Dendritic cell treated with granulocyte-macrophage colony-stimulating factor and Interleukin-4, amounts not matched to agents 40 ng/mL and 50 ng/mL, for 4 days (primary cell): ENCODE measurements at regions of chr10 and their contacts with region 1.

Region 1: DNA sequence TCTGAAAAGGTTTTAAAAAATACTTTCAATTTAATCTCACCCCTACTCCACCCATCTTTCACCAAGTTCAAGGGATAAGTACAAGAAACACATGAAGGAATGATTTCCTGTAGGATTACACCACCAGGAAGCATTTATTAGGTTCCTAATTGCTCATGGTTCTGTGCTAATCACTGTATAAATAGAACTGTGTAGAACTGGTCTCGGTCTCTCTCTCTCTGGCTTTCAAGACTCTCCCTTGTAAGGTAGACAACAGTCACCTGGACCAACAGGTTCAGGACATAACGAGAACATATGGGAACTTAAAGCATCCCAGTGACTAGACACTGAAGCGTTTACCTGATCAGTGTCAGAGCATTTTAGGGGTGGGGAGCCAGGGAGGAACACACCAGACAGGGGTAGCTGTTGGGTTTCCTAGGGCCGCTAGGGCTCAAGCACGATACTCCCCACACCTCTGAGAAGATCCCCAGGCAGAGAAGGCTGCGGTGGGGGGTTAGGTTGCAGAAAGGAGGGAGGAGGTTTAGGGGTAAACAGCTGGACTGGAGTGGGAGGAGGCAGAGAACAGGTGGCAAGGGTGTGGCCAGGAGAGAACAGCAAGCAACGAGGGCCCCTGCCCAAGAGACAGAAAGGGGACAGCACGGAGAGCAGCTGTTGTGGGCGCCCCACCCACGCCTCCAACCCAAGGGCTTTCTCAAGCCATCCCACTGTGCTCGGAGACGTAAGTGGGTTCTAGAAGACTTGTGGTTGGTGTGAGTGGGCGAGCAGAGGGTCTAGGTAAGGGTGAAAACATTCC is 52.5 kb upstream of the USP6NL start:
- H3K4me3 Mint-ChIP-seq: peak overlapping the region; percentile 27
- H3K27ac Mint-ChIP-seq: peak overlapping the region; percentile 51
- H3K4me1 Mint-ChIP-seq: peaks cover 59% of the 10 kb centered on the region
- H3K27me3 Mint-ChIP-seq: peaks cover 41% of the 10 kb centered on the region

Region 2: DNA sequence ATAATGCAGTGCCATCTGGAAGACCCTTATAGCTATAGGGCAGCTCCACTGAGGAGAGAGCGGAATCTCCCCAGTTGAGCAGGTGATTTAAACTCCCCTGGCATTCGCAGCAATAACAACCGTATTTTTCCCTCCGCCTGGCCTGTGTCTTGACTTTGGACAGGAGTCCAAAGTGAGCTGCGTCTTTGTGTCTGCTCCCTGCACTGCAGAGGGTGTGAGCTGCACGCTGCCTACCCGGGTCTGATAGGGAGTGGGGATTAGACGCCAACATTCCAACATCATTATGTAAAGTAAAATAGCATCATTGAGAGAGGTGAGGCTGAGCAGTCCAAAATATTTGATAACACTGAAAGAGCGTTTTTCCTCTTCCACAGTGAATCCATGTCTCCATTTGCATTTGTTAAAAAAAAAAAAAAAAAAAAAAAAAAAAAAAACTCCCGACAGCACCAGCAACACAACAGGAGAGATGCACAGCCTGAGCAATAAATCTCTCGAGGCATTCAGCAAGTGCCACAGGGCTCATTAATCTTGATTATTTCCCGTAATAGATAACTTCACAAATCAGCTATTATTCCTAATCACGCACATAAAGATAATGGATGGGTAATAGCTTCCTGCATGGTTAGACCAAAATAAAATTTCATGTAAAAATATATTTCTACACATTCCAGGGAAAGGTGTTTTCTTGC is 577.6 kb before region 1 on chr10:
- intact Hi-C with region 1: no loop called
- H3K4me3 Mint-ChIP-seq: no peak overlapping the region
- H3K27ac Mint-ChIP-seq: no peak overlapping the region
- H3K4me1 Mint-ChIP-seq: no peaks in the 10 kb centered on the region
- H3K27me3 Mint-ChIP-seq: no peaks in the 10 kb centered on the region

Region 3: GRCh38 chr10:11515596-11516430 is 148.1 kb before region 1 on chr10:
- intact Hi-C with region 1: no loop called
- H3K4me3 Mint-ChIP-seq: no peak overlapping the region
- H3K27ac Mint-ChIP-seq: no peak overlapping the region
- H3K4me1 Mint-ChIP-seq: peaks cover 6% of the 10 kb centered on the region
- H3K27me3 Mint-ChIP-seq: no peaks in the 10 kb centered on the region

Region 4: GRCh38 chr10:11631890-11632587 is 31.9 kb before region 1 on chr10:
- intact Hi-C with region 1: loop called (anchors 5 kb)
- H3K4me3 Mint-ChIP-seq: no peak overlapping the region
- H3K27ac Mint-ChIP-seq: no peak overlapping the region
- H3K4me1 Mint-ChIP-seq: peaks cover 6% of the 10 kb centered on the region
- H3K27me3 Mint-ChIP-seq: peaks cover 13% of the 10 kb centered on the region

Region 5: DNA sequence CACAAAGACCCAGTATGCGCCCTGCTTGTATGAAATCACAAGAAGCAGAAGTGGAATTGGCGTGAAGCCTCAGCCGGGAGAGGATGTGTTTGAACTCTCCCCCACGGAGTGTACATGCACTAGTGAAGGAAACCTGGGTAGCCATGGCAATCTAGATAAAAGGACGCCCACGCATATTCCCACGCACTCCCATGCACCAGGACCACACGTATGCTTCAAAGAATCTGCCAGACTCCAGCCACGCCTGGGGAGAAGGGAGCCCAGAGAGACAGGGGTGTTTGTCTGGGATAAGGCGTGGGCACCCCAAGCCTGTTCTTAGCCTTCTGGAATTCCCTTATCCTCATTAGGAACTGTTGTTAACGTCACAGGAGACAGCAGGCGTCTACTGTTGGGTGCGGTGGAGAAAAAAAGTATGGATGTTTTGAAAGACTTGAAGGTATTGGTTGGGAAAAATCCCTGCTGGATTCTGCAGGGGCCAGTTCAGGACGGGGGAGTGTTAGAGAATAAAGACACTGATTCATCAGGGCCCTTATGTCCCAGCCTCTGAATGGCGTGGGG is 49.3 kb after region 1 on chr10:
- intact Hi-C with region 1: loop called (anchors 10 kb)
- H3K4me3 Mint-ChIP-seq: no peak overlapping the region
- H3K27ac Mint-ChIP-seq: no peak overlapping the region
- H3K4me1 Mint-ChIP-seq: peaks cover 63% of the 10 kb centered on the region
- H3K27me3 Mint-ChIP-seq: peaks cover 41% of the 10 kb centered on the region

Region 6: GRCh38 chr10:11742005-11742778 is 78.2 kb after region 1 on chr10 and contains the start of gene ECHDC3:
- intact Hi-C with region 1: no loop called
- H3K4me3 Mint-ChIP-seq: peak within 1 kb of the TSS; percentile 68
- H3K27ac Mint-ChIP-seq: peak within 1 kb of the TSS; percentile 65
- H3K4me1 Mint-ChIP-seq: peaks cover 36% of the 10 kb centered on the region
- H3K27me3 Mint-ChIP-seq: peaks cover 18% of the 10 kb centered on the region

Region 7: GRCh38 chr10:11823122-11823988 is 159.4 kb after region 1 on chr10 and contains the start of gene PROSER2:
- intact Hi-C with region 1: no loop called
- H3K4me3 Mint-ChIP-seq: peak within 1 kb of the TSS; percentile 79
- H3K27ac Mint-ChIP-seq: peak within 1 kb of the TSS; percentile 60
- H3K4me1 Mint-ChIP-seq: peaks cover 18% of the 10 kb centered on the region
- H3K27me3 Mint-ChIP-seq: peaks cover 17% of the 10 kb centered on the region